ENCODE measurements at regions of chr1 and their contacts with region 1.

Region 1: GRCh38 chr1:151008190-151008860 is at the start of gene PRUNE1:
- DNase-seq: peak; percentile 97
- H3K4me3 Mint-ChIP-seq: peak within 1 kb of the TSS; percentile 99
- H3K27ac Mint-ChIP-seq: peak within 1 kb of the TSS; percentile 97
- H3K4me1 Mint-ChIP-seq: peaks cover 64% of the 10 kb centered on the region
- H3K27me3 Mint-ChIP-seq: no peaks in the 10 kb centered on the region
- total RNA-seq, gene PRUNE1: 12.5 to 17.5 TPM

Region 2: GRCh38 chr1:150629115-150629928 is 379.0 kb before region 1 on chr1 and contains the start of gene ENSA:
- CTCF ChIA-PET with region 1: no interaction called
- POLR2A ChIA-PET with region 1: no interaction called
- intact Hi-C with region 1: loop called (anchors 5 kb)
- DNase-seq: peak; percentile 97
- H3K4me3 Mint-ChIP-seq: no peak within 1 kb of the TSS
- H3K27ac Mint-ChIP-seq: no peak within 1 kb of the TSS
- H3K4me1 Mint-ChIP-seq: peaks cover 41% of the 10 kb centered on the region
- H3K27me3 Mint-ChIP-seq: no peaks in the 10 kb centered on the region
- total RNA-seq, gene ENSA: 212 to 219 TPM

Region 3: DNA sequence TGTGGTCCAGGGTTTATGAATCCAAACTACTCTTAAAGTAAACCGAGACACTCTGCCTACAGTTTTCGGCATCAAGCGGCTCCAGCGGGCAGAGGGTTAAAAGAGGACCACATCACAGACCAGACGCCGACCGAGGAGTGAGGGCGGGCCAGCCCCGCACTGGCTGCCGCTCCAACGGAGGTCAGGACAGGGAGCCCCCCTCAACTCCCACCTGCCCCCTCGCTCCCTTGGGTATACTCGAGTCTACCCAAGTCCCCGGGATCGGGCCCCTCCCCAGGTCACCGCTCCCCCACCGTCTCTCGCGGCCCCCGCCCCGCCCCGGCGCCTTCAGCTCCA is 132.2 kb before region 1 on chr1:
- CTCF ChIA-PET with region 1: interaction called, 3 read pairs
- POLR2A ChIA-PET with region 1: no interaction called
- intact Hi-C with region 1: loop called (anchors 2 kb)
- DNase-seq: no peak
- H3K4me3 Mint-ChIP-seq: peak overlapping the region; percentile 84
- H3K27ac Mint-ChIP-seq: peak overlapping the region; percentile 85
- H3K4me1 Mint-ChIP-seq: peaks cover 30% of the 10 kb centered on the region
- H3K27me3 Mint-ChIP-seq: no peaks in the 10 kb centered on the region

Region 4: GRCh38 chr1:150995896-150996295 is 12.4 kb before region 1 on chr1:
- CTCF ChIA-PET with region 1: interaction called, 59 read pairs
- POLR2A ChIA-PET with region 1: interaction called, 5 read pairs
- intact Hi-C with region 1: no loop called
- DNase-seq: peak; percentile 41
- H3K4me3 Mint-ChIP-seq: no peak overlapping the region
- H3K27ac Mint-ChIP-seq: no peak overlapping the region
- H3K4me1 Mint-ChIP-seq: peaks cover 18% of the 10 kb centered on the region
- H3K27me3 Mint-ChIP-seq: no peaks in the 10 kb centered on the region

Region 5: DNA sequence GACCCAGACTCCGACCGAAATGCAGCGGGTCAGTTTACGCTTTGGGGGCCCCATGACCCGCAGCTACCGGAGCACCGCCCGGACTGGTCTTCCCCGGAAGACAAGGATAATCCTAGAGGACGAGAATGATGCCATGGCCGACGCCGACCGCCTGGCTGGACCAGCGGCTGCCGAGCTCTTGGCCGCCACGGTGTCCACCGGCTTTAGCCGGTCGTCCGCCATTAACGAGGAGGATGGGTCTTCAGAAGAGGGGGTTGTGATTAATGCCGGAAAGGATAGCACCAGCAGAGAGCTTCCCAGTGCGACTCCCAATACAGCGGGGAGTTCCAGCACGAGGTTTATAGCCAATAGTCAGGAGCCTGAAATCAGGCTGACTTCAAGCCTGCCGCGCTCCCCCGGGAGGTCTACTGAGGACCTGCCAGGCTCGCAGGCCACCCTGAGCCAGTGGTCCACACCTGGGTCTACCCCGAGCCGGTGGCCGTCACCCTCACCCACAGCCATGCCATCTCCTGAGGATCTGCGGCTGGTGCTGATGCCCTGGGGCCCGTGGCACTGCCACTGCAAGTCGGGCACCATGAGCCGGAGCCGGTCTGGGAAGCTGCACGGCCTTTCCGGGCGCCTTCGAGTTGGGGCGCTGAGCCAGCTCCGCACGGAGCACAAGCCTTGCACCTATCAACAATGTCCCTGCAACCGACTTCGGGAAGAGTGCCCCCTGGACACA is 39.8 kb after region 1 on chr1:
- CTCF ChIA-PET with region 1: interaction called, 5 read pairs
- POLR2A ChIA-PET with region 1: interaction called, 3 read pairs
- intact Hi-C with region 1: loop called (anchors 2 kb)
- DNase-seq: peak; percentile 74
- H3K4me3 Mint-ChIP-seq: peak overlapping the region; percentile 88
- H3K27ac Mint-ChIP-seq: peak overlapping the region; percentile 82
- H3K4me1 Mint-ChIP-seq: peaks cover 46% of the 10 kb centered on the region
- H3K27me3 Mint-ChIP-seq: no peaks in the 10 kb centered on the region

Region 6: DNA sequence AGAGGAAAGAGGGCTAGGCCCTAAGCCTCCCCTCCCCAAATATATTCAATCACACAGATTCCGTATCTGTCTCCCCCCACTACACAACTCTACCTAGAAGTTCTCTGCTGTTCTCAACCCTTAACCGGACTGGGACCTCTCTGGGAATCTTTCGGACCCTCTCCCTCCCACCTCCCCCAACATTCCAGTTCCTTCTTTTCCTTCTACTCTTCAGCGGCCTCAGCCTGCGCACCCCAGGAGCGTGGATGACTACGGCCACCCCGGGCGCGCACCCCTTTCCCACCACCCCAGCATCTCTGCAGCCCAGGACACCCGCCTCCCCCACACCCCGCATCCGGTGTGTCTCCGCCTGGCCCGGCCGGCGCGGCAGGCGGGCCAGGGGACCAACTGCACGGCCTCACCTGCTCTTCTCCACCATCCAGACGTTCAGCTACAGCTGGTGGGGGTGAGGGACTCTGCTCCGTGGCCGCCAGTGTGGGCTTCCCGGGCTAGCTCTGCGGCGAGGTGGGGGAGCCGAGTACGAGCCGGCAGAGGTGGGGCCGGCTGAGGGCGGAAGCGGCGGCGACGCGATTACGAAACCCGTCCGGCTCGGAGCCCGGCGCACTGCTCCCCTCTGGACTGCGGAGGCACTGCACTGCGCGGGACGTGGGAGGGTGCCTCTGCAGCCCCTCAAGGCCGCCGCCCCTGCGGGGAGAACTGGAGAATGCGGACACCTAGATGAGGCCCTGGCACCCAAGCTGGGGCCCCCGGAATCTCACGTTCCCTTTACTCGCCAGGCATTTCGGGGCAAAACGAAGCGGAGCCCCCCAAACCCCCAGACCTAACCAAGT is 51.0 kb after region 1 on chr1 and contains the start of gene CDC42SE1:
- CTCF ChIA-PET with region 1: interaction called, 4 read pairs
- POLR2A ChIA-PET with region 1: interaction called, 17 read pairs
- intact Hi-C with region 1: loop called (anchors 1 kb)
- DNase-seq: peak; percentile 89
- H3K4me3 Mint-ChIP-seq: peak within 1 kb of the TSS; percentile 98
- H3K27ac Mint-ChIP-seq: peak within 1 kb of the TSS; percentile 99
- H3K4me1 Mint-ChIP-seq: peaks cover 56% of the 10 kb centered on the region
- H3K27me3 Mint-ChIP-seq: no peaks in the 10 kb centered on the region
- total RNA-seq, gene CDC42SE1: 135 to 136 TPM

Region 7: GRCh38 chr1:151070474-151071276 is 62.4 kb after region 1 on chr1 and contains the start of gene GABPB2:
- CTCF ChIA-PET with region 1: no interaction called
- POLR2A ChIA-PET with region 1: no interaction called
- intact Hi-C with region 1: loop called (anchors 1 kb)
- DNase-seq: peak; percentile 93
- H3K4me3 Mint-ChIP-seq: peak within 1 kb of the TSS; percentile 94
- H3K27ac Mint-ChIP-seq: peak within 1 kb of the TSS; percentile 100
- H3K4me1 Mint-ChIP-seq: peaks cover 15% of the 10 kb centered on the region
- H3K27me3 Mint-ChIP-seq: no peaks in the 10 kb centered on the region
- total RNA-seq, gene GABPB2: 13.6 to 14.9 TPM